ENCODE measurements at regions of chr14 and their contacts with region 1.

Region 1: DNA sequence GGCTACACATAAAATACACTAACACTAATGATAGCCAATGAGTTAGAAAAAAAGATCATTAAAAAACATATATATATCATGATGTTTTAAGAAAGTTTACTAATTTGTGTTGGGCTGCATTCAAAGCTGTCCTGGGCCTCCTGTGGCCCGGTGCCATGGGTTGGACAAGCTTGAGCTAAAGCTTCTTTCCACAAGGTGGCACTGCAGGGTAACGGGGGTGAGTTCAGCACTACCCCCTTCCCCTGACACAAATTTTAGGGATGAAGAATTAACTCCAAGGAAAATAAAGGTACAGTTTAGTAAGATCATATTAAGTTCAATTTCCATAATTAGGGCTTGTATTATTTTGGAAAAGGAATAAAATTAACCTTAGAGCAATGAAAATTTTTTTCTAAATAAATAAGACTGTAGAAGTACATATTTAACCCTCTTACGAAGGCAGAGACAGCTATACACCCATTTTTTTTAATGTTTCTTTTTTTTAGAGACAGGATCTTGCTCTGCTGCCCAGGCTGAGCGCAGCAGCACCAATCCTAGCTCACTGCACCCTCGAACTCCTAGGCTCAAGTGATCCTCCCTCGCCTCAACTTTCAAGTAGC is 38.9 kb downstream of the PPP1R13B start:
- DNase-seq: peak; percentile 69
- H3K4me3 ChIP-seq: no peak overlapping the region
- H3K27ac ChIP-seq: no peak overlapping the region
- H3K4me1 ChIP-seq: peaks cover 5% of the 10 kb centered on the region
- H3K27me3 ChIP-seq: no peaks in the 10 kb centered on the region
- CTCF ChIP-seq: peak; percentile 69 to 84
- POLR2A ChIP-seq: no peak

Region 2: DNA sequence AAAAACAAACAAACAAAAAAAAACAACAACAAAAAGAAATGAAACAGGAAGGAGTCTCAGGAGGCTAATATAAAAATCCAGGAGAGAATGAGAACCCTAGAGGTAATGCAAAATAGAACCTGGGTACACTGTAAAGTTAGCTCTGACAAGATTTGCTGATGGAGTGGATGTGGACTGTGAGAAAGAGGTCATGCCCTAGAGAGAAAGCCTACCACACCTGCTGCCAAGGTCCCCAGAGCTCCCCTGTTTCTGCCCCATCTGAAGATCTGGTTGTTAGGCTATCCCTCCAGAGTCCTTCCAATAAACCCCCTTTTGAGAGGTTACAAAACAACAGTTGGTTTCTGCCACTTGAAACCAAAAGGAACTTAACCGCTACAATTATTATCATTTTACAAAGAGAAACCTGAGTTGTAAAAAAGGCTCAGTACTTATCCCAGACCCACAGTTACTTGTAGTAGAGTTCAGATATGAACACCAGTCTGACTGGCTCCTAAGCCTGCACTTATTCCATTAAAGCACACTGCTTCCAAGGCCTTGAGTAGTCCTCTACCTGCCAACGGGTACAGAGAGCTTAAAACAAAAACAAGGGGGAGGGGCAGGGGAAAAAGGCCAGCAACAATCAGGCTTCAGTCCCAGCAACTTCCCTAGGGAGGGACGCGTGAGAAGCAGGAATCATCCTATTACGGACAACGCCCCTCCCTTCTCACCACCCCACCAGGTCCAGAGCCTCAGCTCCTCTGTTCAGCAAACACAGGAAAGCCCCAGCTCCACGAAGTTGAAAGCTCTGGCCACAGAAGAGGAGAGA is 11.2 kb after region 1 on chr14:
- CTCF ChIA-PET with region 1: interaction called, 47 read pairs
- POLR2A ChIA-PET with region 1: no interaction called
- dilution Hi-C with region 1: no loop called
- intact Hi-C with region 1: no loop called
- DNase-seq: peak; percentile 30
- H3K4me3 ChIP-seq: no peak overlapping the region
- H3K27ac ChIP-seq: no peak overlapping the region
- H3K4me1 ChIP-seq: peaks cover 11% of the 10 kb centered on the region
- H3K27me3 ChIP-seq: no peaks in the 10 kb centered on the region
- CTCF ChIP-seq: no peak
- POLR2A ChIP-seq: no peak

Region 3: DNA sequence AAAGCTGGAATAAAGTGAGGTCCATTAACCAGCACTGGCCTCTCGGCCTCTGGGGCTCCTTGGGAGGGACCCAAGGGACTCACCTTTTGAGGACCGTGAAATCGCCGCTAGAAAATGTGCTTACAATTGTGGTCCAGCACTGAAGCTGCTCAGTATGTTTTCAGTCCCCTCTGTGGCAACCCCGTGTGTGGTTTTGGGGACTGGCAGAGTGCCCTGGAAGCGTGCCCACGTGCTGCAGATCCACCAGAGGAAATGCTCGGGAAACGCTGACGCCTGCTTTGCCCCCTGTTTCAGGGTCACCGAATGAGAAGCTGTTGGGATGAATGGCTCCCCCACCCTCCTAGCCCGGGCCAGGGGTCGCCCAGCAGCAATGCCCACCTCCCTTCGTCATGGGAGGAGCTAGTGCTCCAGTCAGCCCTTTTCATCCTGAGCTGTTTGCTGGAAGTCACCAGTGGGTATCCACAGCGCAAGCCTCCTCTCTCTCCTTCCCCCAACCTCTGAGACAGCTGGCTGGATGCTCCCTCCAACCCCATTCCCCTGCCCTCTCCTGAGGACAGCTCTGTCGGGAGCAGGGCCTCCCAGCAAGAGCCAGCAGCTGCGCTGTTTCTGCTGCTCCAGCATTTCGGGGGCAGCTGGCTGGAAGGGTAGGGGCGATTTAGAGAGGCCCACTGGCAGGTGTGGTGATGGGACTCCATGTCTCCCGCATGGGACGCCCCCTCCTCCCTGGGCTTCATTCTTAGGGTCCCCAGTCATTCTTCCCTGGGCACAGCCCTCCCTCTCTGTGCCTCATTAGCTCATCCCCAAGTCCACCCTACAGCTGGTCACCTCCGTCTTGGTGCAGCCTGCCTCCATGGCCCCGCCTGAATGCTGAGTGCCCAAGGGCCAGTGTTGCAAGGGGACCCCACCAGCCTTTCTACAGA is 72.1 kb after region 1 on chr14:
- CTCF ChIA-PET with region 1: interaction called, 11 read pairs
- POLR2A ChIA-PET with region 1: interaction called, 3 read pairs
- dilution Hi-C with region 1: no loop called
- intact Hi-C with region 1: no loop called
- DNase-seq: peak; percentile 43
- H3K4me3 ChIP-seq: no peak overlapping the region
- H3K27ac ChIP-seq: no peak overlapping the region
- H3K4me1 ChIP-seq: peaks cover 26% of the 10 kb centered on the region
- H3K27me3 ChIP-seq: no peaks in the 10 kb centered on the region
- CTCF ChIP-seq: no peak
- POLR2A ChIP-seq: no peak

Region 4: GRCh38 chr14:103910262-103910935 is 101.9 kb after region 1 on chr14:
- CTCF ChIA-PET with region 1: interaction called, 253 read pairs
- POLR2A ChIA-PET with region 1: no interaction called
- dilution Hi-C with region 1: no loop called
- intact Hi-C with region 1: loop called (anchors 1 kb)
- DNase-seq: peak; percentile 75
- H3K4me3 ChIP-seq: no peak overlapping the region
- H3K27ac ChIP-seq: no peak overlapping the region
- H3K4me1 ChIP-seq: peaks cover 4% of the 10 kb centered on the region
- H3K27me3 ChIP-seq: no peaks in the 10 kb centered on the region
- CTCF ChIP-seq: peak; percentile 85
- POLR2A ChIP-seq: no peak

Region 5: DNA sequence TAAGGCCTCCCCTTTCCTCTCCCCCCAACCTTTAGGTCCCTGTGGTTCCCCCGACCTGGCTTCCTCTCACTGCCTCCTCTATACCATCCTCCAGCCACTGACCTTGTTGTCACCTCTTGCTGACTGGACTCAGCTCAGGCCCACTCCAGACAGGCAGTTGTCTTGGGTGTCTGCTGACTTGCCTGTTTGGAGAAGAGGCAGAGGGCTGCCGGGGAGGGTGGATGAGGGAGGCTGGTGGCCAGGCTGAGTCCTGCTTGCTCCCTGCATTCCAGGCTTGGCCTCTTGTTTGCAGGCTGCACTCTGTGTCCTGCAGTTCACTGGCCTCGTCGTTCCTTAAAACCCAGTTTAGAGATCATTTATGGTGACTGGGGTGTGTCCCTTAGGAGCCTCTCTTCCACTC is 164.9 kb after region 1 on chr14:
- CTCF ChIA-PET with region 1: interaction called, 143 read pairs
- POLR2A ChIA-PET with region 1: no interaction called
- dilution Hi-C with region 1: no loop called
- intact Hi-C with region 1: no loop called
- DNase-seq: no peak
- H3K4me3 ChIP-seq: no peak overlapping the region
- H3K27ac ChIP-seq: no peak overlapping the region
- H3K4me1 ChIP-seq: no peaks in the 10 kb centered on the region
- H3K27me3 ChIP-seq: no peaks in the 10 kb centered on the region
- CTCF ChIP-seq: no peak
- POLR2A ChIP-seq: no peak

Region 6: GRCh38 chr14:104078031-104078455 is 269.5 kb after region 1 on chr14:
- CTCF ChIA-PET with region 1: interaction called, 11 read pairs
- POLR2A ChIA-PET with region 1: no interaction called
- dilution Hi-C with region 1: no loop called
- intact Hi-C with region 1: no loop called
- DNase-seq: peak; percentile 81
- H3K4me3 ChIP-seq: no peak overlapping the region
- H3K27ac ChIP-seq: no peak overlapping the region
- H3K4me1 ChIP-seq: no peaks in the 10 kb centered on the region
- H3K27me3 ChIP-seq: peaks cover 0 to 2% of the 10 kb centered on the region in 2 experiments
- CTCF ChIP-seq: peak; percentile 100
- POLR2A ChIP-seq: no peak

Measured in endothelial cell of umbilical vein (primary cell).